ENCODE measurements at regions of chrX and their contacts with region 1.

Region 1: GRCh38 chrX:79270401-79270800 is 96.7 kb downstream of the ITM2A start:
- DNase-seq: peak; percentile 89
- H3K4me3 ChIP-seq: no peak overlapping the region
- H3K27ac ChIP-seq: peak overlapping the region in 5 of 8 donors; percentile 31 to 65 (median 51)
- H3K4me1 ChIP-seq: peaks cover 0 to 43% (median 7%) of the 10 kb centered on the region in 6 donors
- H3K27me3 ChIP-seq: no peaks in the 10 kb centered on the region
- CTCF ChIP-seq: peak in 8 of 11 experiments; percentile 30 to 64 (median 58)
- POLR2A ChIP-seq: no peak

Region 2: DNA sequence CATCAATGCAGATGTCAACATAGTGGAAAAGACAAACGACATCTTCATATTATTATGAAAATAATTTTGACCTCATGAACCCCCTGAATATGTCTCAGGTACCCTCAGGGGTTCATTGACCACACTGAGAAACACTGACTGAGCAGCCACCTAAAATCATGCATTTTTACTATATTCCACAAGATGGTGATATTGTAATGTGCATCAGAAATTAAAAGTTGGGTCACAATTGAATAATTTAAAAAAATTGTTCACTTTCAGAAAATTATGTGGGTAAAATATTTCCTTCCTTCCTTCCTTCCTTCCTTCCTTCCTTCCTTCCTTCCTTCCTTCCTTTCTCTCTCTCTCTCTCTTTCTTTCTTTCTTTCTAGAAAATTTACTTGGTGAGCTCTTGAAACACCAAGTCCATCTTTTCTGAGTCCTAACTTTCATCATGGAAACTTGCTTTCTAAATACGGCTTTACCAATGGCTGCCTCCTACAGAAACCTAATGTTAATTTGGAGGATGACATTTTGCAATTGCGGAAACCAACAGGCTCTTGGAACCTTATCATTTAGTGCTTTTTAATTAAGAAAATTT is 714.9 kb before region 1 on chrX:
- intact Hi-C with region 1: loop called (anchors 10 kb)
- DNase-seq: no peak
- H3K4me3 ChIP-seq: no peak overlapping the region
- H3K27ac ChIP-seq: no peak overlapping the region
- H3K4me1 ChIP-seq: no peaks in the 10 kb centered on the region
- H3K27me3 ChIP-seq: no peaks in the 10 kb centered on the region
- CTCF ChIP-seq: peak in 10 of 11 experiments; percentile 17 to 59 (median 40)
- POLR2A ChIP-seq: no peak

Region 3: DNA sequence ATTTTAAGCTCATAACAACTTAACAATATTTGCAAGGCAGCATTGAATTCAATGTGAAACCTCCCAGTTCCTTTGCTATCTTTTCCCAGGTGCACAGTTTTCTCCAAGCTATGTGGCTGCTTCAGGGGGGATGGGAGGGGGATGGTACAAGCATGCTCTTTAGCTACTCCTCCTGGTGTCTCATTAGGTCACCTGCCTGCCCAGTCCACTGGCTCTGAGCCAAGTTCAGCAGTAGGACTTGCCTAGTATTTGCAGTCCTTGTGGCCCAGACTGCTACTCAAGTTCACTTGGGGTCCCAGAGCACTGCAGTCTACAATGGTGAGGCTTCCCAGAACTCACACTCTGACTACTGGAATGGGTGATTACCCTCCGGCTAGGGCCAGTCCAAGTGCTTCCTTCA is 360.4 kb before region 1 on chrX:
- intact Hi-C with region 1: no loop called
- DNase-seq: no peak
- H3K4me3 ChIP-seq: no peak overlapping the region
- H3K27ac ChIP-seq: no peak overlapping the region
- H3K4me1 ChIP-seq: no peaks in the 10 kb centered on the region
- H3K27me3 ChIP-seq: no peaks in the 10 kb centered on the region
- CTCF ChIP-seq: no peak
- POLR2A ChIP-seq: no peak

Region 4: DNA sequence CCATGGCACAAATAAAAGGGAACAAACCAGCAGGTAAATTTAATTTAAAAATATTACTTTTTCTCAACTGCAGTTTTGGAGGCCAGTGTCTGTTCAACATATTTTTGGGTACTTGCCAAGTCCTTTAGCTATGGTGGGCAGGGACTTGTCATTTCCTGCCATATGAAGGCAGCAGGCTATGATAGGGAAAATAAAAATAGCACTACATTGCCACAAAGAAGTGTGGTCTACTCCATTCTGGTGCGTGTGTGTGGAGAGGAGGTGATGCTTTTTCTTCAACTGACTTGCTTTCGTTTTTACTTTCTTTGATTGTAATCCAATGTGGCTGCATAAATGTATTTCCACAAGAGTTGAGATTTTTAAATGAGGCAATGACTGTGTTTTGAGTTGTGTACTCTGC is 108.7 kb before region 1 on chrX:
- intact Hi-C with region 1: no loop called
- DNase-seq: no peak
- H3K4me3 ChIP-seq: peak overlapping the region in 3 of 8 donors; percentile 8 to 40 (median 11)
- H3K27ac ChIP-seq: peak overlapping the region; percentile 44 to 75 (median 70)
- H3K4me1 ChIP-seq: peaks cover 0 to 51% (median 13%) of the 10 kb centered on the region in 6 donors
- H3K27me3 ChIP-seq: no peaks in the 10 kb centered on the region
- CTCF ChIP-seq: no peak
- POLR2A ChIP-seq: no peak